ENCODE measurements at regions of chr15 and their contacts with region 1.

Region 1: DNA sequence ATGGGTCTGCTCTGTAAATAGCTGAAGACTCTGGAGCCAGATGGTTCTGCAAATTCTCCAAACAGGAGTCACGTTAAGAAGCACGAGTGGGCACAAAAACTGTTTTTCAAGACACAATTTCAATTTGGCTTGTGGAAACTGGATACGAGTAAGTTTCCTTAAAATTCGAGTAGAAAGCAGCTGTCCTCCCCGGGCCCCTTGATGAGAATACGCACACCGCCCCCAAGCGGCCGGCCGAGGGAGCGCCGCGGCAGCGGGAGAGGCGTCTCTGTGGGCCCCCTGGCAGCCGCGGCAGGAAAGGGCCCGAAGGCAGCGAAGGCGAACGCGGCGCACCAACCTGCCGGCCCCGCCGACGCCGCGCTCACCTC is 778 bp upstream of the THBS1 start:
- DNase-seq: peak; percentile 65 to 88 (median 76)
- ATAC-seq: peak; percentile 91
- H3K4me3 ChIP-seq: peak overlapping the region; percentile 55
- H3K4me3 Mint-ChIP-seq: peak overlapping the region; percentile 40
- H3K27ac ChIP-seq: no peak overlapping the region
- H3K27ac Mint-ChIP-seq: no peak overlapping the region
- H3K4me1 ChIP-seq: peaks cover 27% of the 10 kb centered on the region
- H3K4me1 Mint-ChIP-seq: peaks cover 15% of the 10 kb centered on the region
- H3K27me3 ChIP-seq: peaks cover 17 to 28% of the 10 kb centered on the region in 2 experiments
- H3K27me3 Mint-ChIP-seq: peaks cover 81% of the 10 kb centered on the region
- CTCF ChIP-seq: peak; percentile 60

Region 2: DNA sequence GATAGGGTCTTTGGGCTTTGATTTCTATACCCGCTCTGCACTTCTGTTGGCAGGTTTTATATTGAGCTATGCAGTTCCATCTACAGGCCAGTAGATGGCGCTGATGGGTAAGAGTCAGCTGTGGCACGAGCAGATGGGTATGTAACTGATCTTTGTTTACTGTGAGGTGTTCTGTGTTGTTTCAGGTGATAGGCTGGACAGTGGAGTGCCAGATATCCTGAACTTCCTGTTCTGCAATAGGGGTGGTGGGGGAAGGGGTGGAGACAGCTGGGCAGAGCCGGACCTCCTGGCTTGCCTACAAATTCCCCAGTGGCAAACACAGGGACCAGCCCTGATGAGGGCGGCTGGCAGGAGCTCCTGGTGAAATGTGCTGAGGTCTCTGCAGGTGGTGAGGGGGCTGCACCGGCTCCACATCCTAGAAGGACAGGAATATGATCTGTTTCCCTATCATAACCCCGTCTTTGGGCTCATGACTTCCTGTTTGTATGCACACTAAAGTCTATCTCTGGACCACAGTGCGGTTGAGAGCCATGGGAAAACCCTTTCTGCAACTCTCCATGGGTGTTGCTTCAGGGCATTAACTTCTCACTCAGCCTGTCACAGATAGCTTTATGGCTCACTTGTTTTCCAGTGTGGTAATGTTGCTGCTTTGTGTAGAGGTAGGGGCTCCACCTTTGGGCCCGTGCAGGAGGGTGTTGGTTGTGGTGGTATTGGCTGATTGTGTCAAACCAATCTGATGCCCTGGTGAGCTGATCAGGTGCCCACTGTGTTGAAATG is 1139.6 kb before region 1 on chr15:
- CTCF ChIA-PET with region 1: interaction called, 4 read pairs
- POLR2A ChIA-PET with region 1: no interaction called
- intact Hi-C with region 1: loop called in 1 of 2 experiments (anchors 10 kb)
- DNase-seq: peak; percentile 10 to 88 (median 35)
- ATAC-seq: peak; percentile 96
- H3K4me3 ChIP-seq: no peak overlapping the region
- H3K4me3 Mint-ChIP-seq: no peak overlapping the region
- H3K27ac ChIP-seq: no peak overlapping the region
- H3K27ac Mint-ChIP-seq: no peak overlapping the region
- H3K4me1 ChIP-seq: peaks cover 7% of the 10 kb centered on the region
- H3K4me1 Mint-ChIP-seq: peaks cover 5% of the 10 kb centered on the region
- H3K27me3 ChIP-seq: peaks cover 0 to 7% of the 10 kb centered on the region in 2 experiments
- H3K27me3 Mint-ChIP-seq: peaks cover 37% of the 10 kb centered on the region
- CTCF ChIP-seq: peak; percentile 99

Region 3: DNA sequence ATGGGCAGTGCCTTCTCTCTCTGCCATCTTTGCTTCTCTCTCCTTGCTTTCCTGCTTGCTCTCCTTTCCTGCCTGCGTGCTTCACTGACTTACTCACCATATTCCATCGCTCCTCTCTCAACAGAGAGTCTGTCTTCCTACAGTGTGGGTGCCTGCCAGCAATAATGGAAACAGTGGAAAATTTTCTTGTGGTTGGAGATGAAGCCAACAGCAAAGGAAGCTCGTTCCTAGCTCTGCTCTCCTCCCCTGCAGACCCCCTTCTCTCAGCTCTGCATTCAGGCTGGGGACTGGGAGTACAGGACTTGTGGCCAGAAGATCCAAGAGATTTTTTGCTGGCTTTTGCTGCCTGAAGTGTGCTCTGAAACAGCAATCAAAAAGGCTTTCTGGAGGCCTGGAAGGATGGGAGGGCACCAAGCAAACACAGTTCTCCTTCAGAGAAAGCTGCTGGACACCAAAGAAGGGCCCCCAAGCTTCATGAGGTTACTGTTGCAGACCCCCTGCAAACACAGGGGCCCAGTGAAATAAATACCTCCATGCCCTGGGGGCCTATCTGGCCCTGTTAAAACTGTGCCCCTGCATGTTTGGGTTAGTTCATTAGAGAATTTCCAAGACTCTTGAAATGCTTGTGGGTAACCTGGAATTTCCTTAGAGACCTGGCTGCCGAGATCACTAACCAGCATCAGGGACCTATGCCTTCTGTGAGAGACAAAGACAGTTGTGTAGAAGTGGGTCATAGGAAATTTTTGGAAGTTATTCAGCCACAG is 865.6 kb before region 1 on chr15:
- CTCF ChIA-PET with region 1: no interaction called
- POLR2A ChIA-PET with region 1: no interaction called
- intact Hi-C with region 1: loop called in 1 of 2 experiments (anchors 5 kb)
- DNase-seq: no peak
- ATAC-seq: no peak
- H3K4me3 ChIP-seq: no peak overlapping the region
- H3K4me3 Mint-ChIP-seq: no peak overlapping the region
- H3K27ac ChIP-seq: no peak overlapping the region
- H3K27ac Mint-ChIP-seq: no peak overlapping the region
- H3K4me1 ChIP-seq: no peaks in the 10 kb centered on the region
- H3K4me1 Mint-ChIP-seq: no peaks in the 10 kb centered on the region
- H3K27me3 ChIP-seq: no peaks in the 10 kb centered on the region
- H3K27me3 Mint-ChIP-seq: no peaks in the 10 kb centered on the region
- CTCF ChIP-seq: no peak

Region 4: GRCh38 chr15:38724827-38725226 is 855.3 kb before region 1 on chr15:
- CTCF ChIA-PET with region 1: no interaction called
- POLR2A ChIA-PET with region 1: no interaction called
- intact Hi-C with region 1: loop called in 1 of 2 experiments (anchors 10 kb)
- DNase-seq: peak in 1 of 14 experiments; percentile 7
- ATAC-seq: no peak
- H3K4me3 ChIP-seq: no peak overlapping the region
- H3K4me3 Mint-ChIP-seq: no peak overlapping the region
- H3K27ac ChIP-seq: no peak overlapping the region
- H3K27ac Mint-ChIP-seq: no peak overlapping the region
- H3K4me1 ChIP-seq: no peaks in the 10 kb centered on the region
- H3K4me1 Mint-ChIP-seq: no peaks in the 10 kb centered on the region
- H3K27me3 ChIP-seq: no peaks in the 10 kb centered on the region
- H3K27me3 Mint-ChIP-seq: no peaks in the 10 kb centered on the region
- CTCF ChIP-seq: no peak

Region 5: GRCh38 chr15:38817427-38818156 is 762.5 kb before region 1 on chr15:
- CTCF ChIA-PET with region 1: no interaction called
- POLR2A ChIA-PET with region 1: no interaction called
- intact Hi-C with region 1: loop called (anchors 2 to 5 kb)
- DNase-seq: peak; percentile 72 to 85 (median 80)
- ATAC-seq: peak; percentile 99
- H3K4me3 ChIP-seq: no peak overlapping the region
- H3K4me3 Mint-ChIP-seq: no peak overlapping the region
- H3K27ac ChIP-seq: no peak overlapping the region
- H3K27ac Mint-ChIP-seq: no peak overlapping the region
- H3K4me1 ChIP-seq: peaks cover 4% of the 10 kb centered on the region
- H3K4me1 Mint-ChIP-seq: peaks cover 5% of the 10 kb centered on the region
- H3K27me3 ChIP-seq: no peaks in the 10 kb centered on the region
- H3K27me3 Mint-ChIP-seq: peaks cover 31% of the 10 kb centered on the region
- CTCF ChIP-seq: peak; percentile 99

Region 6: DNA sequence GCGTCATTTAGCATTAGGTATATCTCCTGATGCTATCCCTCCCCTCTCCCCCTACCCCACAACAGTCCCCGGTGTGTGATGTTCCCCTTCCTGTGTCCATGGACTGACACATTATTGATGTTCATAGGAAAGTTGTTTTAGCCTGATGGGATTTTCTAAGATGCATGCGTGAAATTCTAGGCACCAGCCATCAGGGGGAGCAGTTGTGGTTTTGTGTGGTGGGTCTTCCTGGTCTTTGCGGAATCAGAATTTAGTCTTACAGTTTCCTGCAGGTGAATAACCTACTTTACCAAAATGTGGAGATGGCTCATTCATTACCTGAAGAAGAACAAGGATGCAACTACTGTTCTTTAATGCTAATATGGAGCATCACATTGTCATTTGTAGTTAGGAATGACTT is 454.2 kb before region 1 on chr15:
- CTCF ChIA-PET with region 1: no interaction called
- POLR2A ChIA-PET with region 1: no interaction called
- intact Hi-C with region 1: loop called in 1 of 2 experiments (anchors 5 kb)
- DNase-seq: peak in 6 of 14 experiments; percentile 1 to 51 (median 22)
- ATAC-seq: no peak
- H3K4me3 ChIP-seq: no peak overlapping the region
- H3K4me3 Mint-ChIP-seq: no peak overlapping the region
- H3K27ac ChIP-seq: no peak overlapping the region
- H3K27ac Mint-ChIP-seq: no peak overlapping the region
- H3K4me1 ChIP-seq: no peaks in the 10 kb centered on the region
- H3K4me1 Mint-ChIP-seq: no peaks in the 10 kb centered on the region
- H3K27me3 ChIP-seq: no peaks in the 10 kb centered on the region
- H3K27me3 Mint-ChIP-seq: peaks cover 13% of the 10 kb centered on the region
- CTCF ChIP-seq: peak; percentile 35

Measured in CD4-positive, alpha-beta T cell (primary cell).